ENCODE measurements at regions of chr3 and their contacts with region 1.

Region 1: DNA sequence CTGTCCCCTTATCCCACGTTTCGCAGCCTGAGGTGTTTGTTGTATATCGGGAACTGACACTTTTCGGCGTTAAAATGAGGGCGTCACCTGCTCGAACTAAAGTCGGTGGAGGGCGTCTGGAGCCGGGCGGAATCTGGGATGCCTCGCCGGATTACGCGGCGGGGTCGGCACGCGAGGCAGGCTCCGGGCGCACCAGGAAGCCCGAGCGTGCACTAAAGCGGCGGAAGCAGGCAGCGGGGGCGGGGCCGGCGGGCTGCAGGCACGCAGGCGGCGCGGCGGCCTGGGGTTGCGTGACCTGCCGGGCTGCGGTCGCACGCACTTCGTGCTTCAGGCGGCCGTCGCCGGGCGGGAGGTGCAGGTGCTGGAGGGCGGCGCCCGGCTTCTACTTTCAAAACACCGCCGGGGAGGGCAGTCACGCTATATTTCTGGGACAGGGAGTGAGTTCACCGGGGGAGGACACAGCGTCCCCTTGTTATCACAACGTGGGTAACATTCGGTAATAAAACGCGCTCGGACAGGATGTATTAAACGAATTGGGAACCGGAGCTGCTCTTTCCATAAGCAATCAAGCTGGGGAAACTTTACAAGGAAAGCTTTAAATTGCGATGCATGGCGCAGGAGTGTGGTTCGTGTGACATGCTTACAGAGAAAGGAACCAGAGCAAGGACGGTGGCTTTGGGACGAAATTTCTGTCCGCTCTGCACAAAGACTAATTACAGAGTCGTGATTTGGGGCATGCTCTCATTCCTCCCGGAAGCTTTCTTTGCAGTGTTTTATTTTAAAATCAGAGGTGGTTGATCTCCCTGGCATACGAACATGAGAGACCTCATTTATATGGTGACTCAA is 9.1 kb upstream of the LEKR1 start:
- DNase-seq: peak; percentile 26 to 94 (median 53)

Region 2: DNA sequence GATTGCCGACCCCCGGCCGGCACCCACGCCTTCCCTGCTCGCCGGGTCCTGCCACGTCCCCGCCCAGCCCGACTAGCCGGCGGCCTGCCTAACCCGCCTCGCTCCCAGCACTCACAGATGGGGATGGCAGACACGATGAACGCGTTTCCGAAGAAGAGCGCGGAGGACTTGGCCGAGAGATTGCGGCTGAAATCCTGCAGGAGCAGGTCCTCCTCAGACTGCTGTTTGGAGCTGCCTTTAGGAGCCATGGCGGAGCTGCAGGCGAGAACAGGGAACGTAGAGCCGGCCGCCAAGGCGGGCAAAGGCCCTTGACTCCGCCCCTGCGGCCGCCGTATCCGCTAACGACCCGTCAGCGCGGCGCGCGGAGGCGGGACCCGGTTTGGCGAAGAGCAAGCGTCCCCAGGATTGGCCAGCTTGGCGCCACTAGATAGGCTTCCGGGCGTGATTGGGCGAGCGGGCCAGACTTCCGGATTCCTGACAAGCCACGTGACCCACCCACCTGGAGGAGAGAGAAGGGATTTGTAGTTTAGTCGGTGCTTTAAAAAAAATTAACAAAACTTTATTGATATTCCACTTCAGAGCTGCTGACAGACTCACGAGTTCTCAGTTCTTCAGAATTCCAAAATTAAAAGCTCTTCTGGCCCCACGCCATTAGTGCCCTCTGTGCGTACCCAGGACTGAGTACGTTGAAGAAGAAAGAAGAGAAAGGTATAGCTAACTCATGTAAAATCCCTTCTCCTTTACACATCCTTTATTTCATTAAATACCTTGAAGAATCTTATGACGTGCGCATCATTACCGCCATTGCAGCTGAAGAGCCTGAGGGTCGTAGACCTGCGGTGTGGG is 262.0 kb before region 1 on chr3 and contains the start of gene SSR3:
- intact Hi-C with region 1: loop called (anchors 5 kb)
- DNase-seq: peak; percentile 98 to 100 (median 99)

Region 3: DNA sequence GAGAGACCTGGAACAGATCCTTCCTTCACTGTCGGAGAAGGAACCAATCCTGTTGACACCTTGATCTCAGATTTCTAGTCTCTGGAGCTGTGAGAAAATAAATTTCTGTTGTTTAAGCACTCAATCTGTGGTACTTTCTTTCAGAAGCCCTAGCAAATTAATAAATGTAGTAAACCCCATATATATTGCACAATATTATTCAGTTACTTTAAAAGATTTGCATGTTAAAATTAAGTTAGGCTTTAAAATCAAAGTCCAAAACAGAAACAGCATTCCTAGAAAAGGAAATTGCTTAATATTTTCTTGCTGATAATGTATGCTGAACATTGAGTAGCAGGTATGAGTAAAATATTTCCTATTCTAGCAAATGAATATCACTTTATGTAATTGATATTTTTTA is 122.3 kb after region 1 on chr3:
- intact Hi-C with region 1: no loop called
- DNase-seq: no peak

Region 4: GRCh38 chr3:157081681-157082210 is 264.7 kb after region 1 on chr3:
- intact Hi-C with region 1: no loop called
- DNase-seq: peak; percentile 82 to 98 (median 94)

Measured in posterior cingulate gyrus (tissue), 11 donors.